Activated CD4-positive, alpha-beta T cell treated with anti-CD3 and anti-CD28 coated beads for 36 hours (primary cell): ENCODE measurements at regions of chr1 and their contacts with region 1.

Region 1: GRCh38 chr1:159071970-159072582 is 4.5 kb downstream of the AIM2 start:
- DNase-seq: no peak
- ATAC-seq: peak; percentile 12
- H3K4me3 Mint-ChIP-seq: peak overlapping the region; percentile 42
- H3K27ac Mint-ChIP-seq: peak overlapping the region; percentile 63
- H3K4me1 Mint-ChIP-seq: peaks cover 52% of the 10 kb centered on the region
- H3K27me3 Mint-ChIP-seq: no peaks in the 10 kb centered on the region

Region 2: GRCh38 chr1:158506369-158506987 is 565.6 kb before region 1 on chr1:
- CTCF ChIA-PET with region 1: interaction called, 6 read pairs
- POLR2A ChIA-PET with region 1: no interaction called
- intact Hi-C with region 1: loop called (anchors 5 kb)
- DNase-seq: peak; percentile 64
- ATAC-seq: peak; percentile 58
- H3K4me3 Mint-ChIP-seq: no peak overlapping the region
- H3K27ac Mint-ChIP-seq: no peak overlapping the region
- H3K4me1 Mint-ChIP-seq: no peaks in the 10 kb centered on the region
- H3K27me3 Mint-ChIP-seq: peaks cover 27% of the 10 kb centered on the region

Region 3: DNA sequence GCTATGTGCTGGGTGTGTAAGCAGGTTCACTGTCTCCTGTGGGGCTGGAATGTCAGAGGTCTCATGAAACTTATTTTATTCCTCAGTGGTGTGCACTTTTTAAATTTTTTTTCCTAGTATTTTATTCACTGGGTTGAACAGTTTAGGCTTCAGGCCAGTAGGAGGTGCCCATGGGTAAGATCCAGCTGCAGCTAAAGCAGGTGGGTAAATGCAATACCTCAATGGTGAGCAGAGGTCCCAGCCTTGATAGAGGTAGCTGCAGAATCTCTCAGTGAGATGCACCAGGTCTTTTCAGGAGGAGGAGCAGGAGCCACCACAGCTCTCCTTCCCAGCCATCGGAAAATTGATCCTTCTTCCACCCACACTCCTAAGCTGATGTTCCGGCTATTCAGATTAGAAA is 278.5 kb before region 1 on chr1:
- CTCF ChIA-PET with region 1: interaction called, 13 read pairs
- POLR2A ChIA-PET with region 1: no interaction called
- intact Hi-C with region 1: loop called (anchors 2 to 10 kb)
- DNase-seq: peak; percentile 51
- ATAC-seq: peak; percentile 36
- H3K4me3 Mint-ChIP-seq: no peak overlapping the region
- H3K27ac Mint-ChIP-seq: no peak overlapping the region
- H3K4me1 Mint-ChIP-seq: no peaks in the 10 kb centered on the region
- H3K27me3 Mint-ChIP-seq: peaks cover 5% of the 10 kb centered on the region

Region 4: DNA sequence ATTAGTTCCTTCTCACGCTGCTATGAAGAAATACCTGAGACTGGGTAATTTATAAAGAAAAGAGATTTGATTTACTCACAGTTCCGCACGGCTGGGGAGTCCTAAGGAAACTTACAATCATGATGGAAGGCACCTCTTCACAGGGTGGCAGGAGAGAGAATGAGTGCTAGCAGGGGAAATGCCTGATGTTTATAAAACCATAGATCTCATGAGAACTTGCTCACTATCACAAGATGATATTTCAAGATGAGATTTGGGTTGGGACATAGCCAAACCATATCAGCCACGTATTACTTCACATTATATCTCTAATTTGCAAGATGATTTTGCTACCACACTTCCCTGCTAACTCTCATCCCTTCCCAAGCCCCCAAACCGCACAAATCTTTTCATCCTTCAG is 231.8 kb before region 1 on chr1:
- CTCF ChIA-PET with region 1: no interaction called
- POLR2A ChIA-PET with region 1: no interaction called
- intact Hi-C with region 1: no loop called
- DNase-seq: no peak
- ATAC-seq: no peak
- H3K4me3 Mint-ChIP-seq: no peak overlapping the region
- H3K27ac Mint-ChIP-seq: no peak overlapping the region
- H3K4me1 Mint-ChIP-seq: no peaks in the 10 kb centered on the region
- H3K27me3 Mint-ChIP-seq: peaks cover 23% of the 10 kb centered on the region

Region 5: DNA sequence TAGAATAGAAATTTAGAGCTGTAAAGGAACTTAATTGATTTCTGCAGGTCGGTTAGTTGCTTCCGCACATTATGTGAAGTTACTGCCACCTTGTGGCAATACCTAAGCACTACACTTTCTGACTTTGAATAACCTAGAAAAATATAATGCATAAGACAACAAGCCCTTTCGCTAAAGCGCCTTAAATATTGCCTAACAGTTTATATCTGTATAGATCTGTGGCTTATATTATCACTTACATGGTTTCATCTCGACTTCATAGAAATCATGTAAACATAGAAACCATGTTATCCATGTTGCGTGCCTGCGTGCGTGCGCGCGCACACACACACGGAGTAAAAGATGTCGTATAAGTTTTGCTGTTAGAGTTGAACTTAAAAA is 73.3 kb before region 1 on chr1:
- CTCF ChIA-PET with region 1: interaction called, 4 read pairs
- POLR2A ChIA-PET with region 1: interaction called, 4 read pairs
- intact Hi-C with region 1: loop called in 1 of 2 experiments (anchors 1 kb)
- DNase-seq: peak; percentile 50
- ATAC-seq: peak; percentile 56
- H3K4me3 Mint-ChIP-seq: no peak overlapping the region
- H3K27ac Mint-ChIP-seq: no peak overlapping the region
- H3K4me1 Mint-ChIP-seq: peaks cover 27% of the 10 kb centered on the region
- H3K27me3 Mint-ChIP-seq: no peaks in the 10 kb centered on the region

Region 6: DNA sequence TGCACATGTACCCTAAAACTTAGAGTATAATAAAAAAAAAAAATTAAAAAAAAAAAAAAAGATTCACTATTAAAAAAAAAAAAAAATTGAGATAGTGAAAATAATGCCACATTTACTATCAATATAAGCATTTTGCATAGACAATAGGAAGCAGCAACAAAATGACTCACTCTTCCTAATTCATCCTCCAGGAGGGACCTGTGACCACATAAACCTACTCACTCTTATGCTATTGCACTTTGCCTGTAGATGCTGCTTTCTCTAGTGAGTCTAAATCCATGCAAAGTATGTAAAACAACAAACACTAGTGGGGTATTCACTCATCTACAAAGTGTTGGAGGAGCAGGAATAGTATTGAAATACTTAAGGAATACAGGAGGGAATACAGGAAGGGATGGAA is 460.8 kb after region 1 on chr1:
- CTCF ChIA-PET with region 1: no interaction called
- POLR2A ChIA-PET with region 1: no interaction called
- intact Hi-C with region 1: no loop called
- DNase-seq: no peak
- ATAC-seq: no peak
- H3K4me3 Mint-ChIP-seq: no peak overlapping the region
- H3K27ac Mint-ChIP-seq: no peak overlapping the region
- H3K4me1 Mint-ChIP-seq: no peaks in the 10 kb centered on the region
- H3K27me3 Mint-ChIP-seq: peaks cover 18% of the 10 kb centered on the region